CD8-positive, alpha-beta T cell (primary cell): ENCODE measurements at regions of chr11 and their contacts with region 1.

Region 1: GRCh38 chr11:64358907-64359711 is at the start of gene RPS6KA4:
- DNase-seq: peak in 7 of 9 experiments; percentile 17 to 76 (median 47)
- ATAC-seq: peak; percentile 77
- H3K4me3 ChIP-seq: peak within 1 kb of the TSS; percentile 76 to 87
- H3K4me3 Mint-ChIP-seq: peak within 1 kb of the TSS; percentile 88
- H3K27ac ChIP-seq: peak within 1 kb of the TSS; percentile 40 to 66
- H3K27ac Mint-ChIP-seq: peak within 1 kb of the TSS; percentile 70
- H3K4me1 ChIP-seq: peaks cover 30% of the 10 kb centered on the region
- H3K4me1 Mint-ChIP-seq: peaks cover 29% of the 10 kb centered on the region
- H3K27me3 ChIP-seq: no peaks in the 10 kb centered on the region
- H3K27me3 Mint-ChIP-seq: no peaks in the 10 kb centered on the region
- CTCF ChIP-seq: no peak
- total RNA-seq, gene RPS6KA4: 8.6 to 10.1 TPM

Region 2: DNA sequence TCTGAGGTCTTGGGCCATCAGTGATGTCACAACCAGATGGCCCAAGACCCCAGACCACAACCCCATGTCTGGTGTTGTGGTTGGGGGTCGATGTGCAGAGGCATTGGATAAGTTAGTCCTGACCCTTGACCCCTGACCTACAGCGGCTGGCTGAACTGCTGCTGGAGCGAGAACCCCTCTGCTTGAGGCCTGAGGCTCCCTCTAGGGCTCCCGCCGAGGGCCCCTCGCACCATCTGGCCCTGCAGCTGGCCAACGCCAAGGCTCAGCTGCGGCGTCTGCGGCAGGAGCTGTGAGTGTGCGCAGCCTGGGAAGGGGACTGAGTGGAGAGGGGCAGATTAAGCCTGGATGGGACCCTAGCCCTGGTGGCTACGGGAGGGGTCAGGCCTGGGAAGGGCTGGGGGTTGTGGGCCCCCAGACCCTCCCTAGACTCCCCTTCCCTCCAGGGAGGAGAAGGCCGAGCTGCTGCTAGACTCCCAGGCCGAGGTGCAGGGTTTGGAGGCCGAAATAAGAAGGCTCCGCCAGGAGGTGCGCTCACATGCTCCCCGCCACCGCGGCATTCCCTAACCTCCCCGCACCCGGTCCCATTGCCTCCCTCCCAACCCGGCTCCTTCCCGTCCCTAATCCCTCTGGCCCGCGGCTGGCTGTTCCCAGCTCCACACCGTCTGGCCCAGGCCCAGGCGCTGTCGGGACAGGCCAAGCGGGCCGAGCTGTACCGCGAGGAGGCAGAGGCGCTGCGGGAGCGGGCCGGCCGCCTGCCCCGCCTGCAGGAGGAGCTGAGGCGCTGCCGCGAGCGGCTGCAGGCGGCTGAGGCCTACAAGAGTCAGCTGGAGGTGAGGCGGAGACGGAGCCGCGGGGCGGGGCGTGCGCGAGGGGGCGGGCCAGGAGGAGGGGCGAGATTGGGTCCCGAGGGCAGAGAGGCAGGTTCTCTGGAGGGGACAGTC is 17.0 kb before region 1 on chr11:
- CTCF ChIA-PET with region 1: interaction called, 6 read pairs
- POLR2A ChIA-PET with region 1: no interaction called
- intact Hi-C with region 1: loop called in 1 of 2 experiments (anchors 1 kb)
- DNase-seq: peak; percentile 75 to 90 (median 88)
- ATAC-seq: peak; percentile 63
- H3K4me3 ChIP-seq: no peak overlapping the region
- H3K4me3 Mint-ChIP-seq: peak overlapping the region; percentile 84
- H3K27ac ChIP-seq: peak overlapping the region in 1 of 2 experiments; percentile 86
- H3K27ac Mint-ChIP-seq: no peak overlapping the region
- H3K4me1 ChIP-seq: peaks cover 34% of the 10 kb centered on the region
- H3K4me1 Mint-ChIP-seq: peaks cover 41% of the 10 kb centered on the region
- H3K27me3 ChIP-seq: no peaks in the 10 kb centered on the region
- H3K27me3 Mint-ChIP-seq: no peaks in the 10 kb centered on the region
- CTCF ChIP-seq: peak; percentile 36

Region 3: GRCh38 chr11:64566042-64566914 is 207.2 kb after region 1 on chr11:
- CTCF ChIA-PET with region 1: no interaction called
- POLR2A ChIA-PET with region 1: no interaction called
- intact Hi-C with region 1: no loop called
- DNase-seq: peak in 3 of 9 experiments; percentile 13 to 53 (median 22)
- ATAC-seq: peak; percentile 34
- H3K4me3 ChIP-seq: no peak overlapping the region
- H3K4me3 Mint-ChIP-seq: no peak overlapping the region
- H3K27ac ChIP-seq: no peak overlapping the region
- H3K27ac Mint-ChIP-seq: no peak overlapping the region
- H3K4me1 ChIP-seq: no peaks in the 10 kb centered on the region
- H3K4me1 Mint-ChIP-seq: no peaks in the 10 kb centered on the region
- H3K27me3 ChIP-seq: no peaks in the 10 kb centered on the region
- H3K27me3 Mint-ChIP-seq: no peaks in the 10 kb centered on the region
- CTCF ChIP-seq: no peak